ENCODE measurements at regions of chr1 and their contacts with region 1.

Region 1: DNA sequence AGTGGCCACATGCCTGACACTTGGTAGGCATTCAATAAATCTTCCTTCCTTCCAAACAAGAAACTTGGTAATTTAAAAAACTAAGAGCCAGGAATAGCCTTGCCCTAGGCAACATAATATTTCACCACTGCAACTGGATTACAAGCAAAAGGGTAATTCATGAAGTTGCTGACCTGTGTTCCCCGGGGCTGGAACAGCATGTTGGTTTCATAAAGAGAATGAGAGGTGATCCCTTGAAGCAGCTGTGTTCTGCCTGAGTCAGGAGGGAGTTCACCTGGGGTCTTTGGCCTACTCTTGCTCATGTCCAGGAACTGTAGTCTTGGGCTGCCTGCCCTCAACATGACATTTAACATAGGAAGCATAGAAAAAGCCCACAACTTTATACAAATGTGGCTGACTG is 329.0 kb upstream of the DAB1 start:
- DNase-seq: no peak
- H3K4me3 ChIP-seq: no peak overlapping the region
- H3K27ac ChIP-seq: no peak overlapping the region
- H3K4me1 ChIP-seq: no peaks in the 10 kb centered on the region
- H3K27me3 ChIP-seq: no peaks in the 10 kb centered on the region
- CTCF ChIP-seq: no peak
- POLR2A ChIP-seq: no peak

Region 2: DNA sequence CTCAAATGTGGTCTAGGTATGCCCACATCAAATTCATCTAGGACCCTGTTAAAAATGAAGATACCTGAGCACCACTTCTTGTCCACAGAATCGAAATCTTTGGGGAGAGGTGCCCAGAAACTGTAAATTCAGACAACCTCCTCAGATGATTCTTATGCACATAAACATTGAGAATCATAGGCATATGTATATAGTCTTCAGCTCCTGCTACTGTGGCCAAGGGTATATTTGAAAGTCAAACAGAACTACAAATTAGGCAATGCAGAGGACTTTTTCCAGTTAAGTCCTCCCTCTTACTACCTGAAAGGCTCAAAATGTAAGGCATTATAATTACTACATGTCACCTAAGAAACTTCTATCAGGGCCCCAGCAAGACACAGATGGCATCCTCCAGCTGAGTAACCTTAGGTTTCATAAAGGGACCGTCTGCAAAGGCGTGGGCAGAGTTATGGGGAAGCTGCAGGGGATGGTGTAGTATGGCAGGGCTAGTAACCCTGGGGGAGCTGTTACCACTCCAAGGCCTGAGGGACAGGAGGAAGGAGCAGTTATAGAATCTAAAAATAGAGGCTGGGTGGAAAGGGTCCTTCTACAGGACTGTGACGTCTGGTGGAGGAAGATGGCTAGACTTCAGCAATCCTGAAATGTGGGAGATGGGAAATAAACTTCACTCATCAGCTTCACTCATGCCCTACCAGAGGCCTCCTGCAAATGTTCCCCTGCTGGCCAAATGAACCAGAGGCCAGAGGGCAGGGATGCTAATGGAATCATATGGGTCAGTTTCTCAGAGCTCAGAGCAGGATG is 375.3 kb before region 1 on chr1:
- CTCF ChIA-PET with region 1: no interaction called
- POLR2A ChIA-PET with region 1: no interaction called
- dilution Hi-C with region 1: no loop called
- intact Hi-C with region 1: no loop called
- DNase-seq: no peak
- H3K4me3 ChIP-seq: no peak overlapping the region
- H3K27ac ChIP-seq: no peak overlapping the region
- H3K4me1 ChIP-seq: no peaks in the 10 kb centered on the region
- H3K27me3 ChIP-seq: no peaks in the 10 kb centered on the region
- CTCF ChIP-seq: no peak
- POLR2A ChIP-seq: no peak

Region 3: GRCh38 chr1:58136387-58136786 is 383.5 kb after region 1 on chr1:
- CTCF ChIA-PET with region 1: no interaction called
- POLR2A ChIA-PET with region 1: no interaction called
- dilution Hi-C with region 1: no loop called
- intact Hi-C with region 1: loop called (anchors 5 kb)
- DNase-seq: no peak
- H3K4me3 ChIP-seq: no peak overlapping the region
- H3K27ac ChIP-seq: no peak overlapping the region
- H3K4me1 ChIP-seq: no peaks in the 10 kb centered on the region
- H3K27me3 ChIP-seq: no peaks in the 10 kb centered on the region
- CTCF ChIP-seq: no peak
- POLR2A ChIP-seq: no peak